Activated CD4-positive, alpha-beta memory T cell treated with anti-CD3 and anti-CD28 coated beads for 36 hours (primary cell): ENCODE measurements at regions of chr9 and their contacts with region 1.

Region 1: DNA sequence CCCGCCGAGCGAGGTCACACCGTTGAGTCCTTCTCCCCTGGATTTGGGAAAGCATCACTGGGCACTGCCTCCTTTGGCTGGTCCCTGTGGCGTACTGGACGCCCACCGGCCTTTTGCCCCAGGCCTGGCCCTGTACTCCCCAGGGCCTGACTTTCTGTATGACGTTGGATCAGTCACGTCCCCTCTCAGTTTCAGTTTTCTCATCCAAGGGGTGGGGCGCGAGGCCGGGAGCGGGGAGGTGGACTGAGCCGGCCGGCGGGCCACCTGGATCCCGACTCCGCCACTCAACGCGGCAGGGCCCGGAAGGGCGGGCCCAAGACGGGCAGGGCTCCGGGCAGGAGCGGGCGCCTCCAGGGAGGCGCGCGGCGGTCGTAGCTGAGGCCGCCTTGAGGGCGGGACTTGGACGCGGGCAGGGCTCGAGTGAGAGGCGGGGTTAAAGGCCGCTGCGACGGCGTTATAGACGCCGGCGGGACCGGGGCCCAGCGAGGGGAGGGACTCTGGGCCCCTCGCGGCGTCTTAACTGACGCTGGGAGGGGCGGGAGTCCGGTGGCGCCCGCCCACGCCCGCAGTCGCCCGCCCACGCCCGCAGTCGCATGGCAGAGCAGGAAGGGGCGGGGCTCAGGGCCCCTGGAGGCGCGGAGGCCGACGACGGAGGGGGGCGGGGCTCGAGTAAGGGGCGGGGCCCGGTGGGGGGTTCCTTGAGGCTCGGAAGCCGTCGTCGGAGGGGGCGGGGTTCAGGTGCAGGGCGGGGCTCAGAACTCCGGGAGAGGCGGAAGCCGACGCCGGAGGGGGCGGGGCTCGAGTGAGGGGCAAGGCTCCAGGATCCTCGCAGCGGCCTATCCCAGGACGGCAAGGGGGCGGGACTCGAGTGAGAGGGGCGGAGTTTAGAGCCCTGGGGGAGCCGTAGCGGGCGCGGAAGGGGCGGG is 549 bp upstream of the CARD19 start:
- DNase-seq: peak; percentile 100
- H3K4me3 Mint-ChIP-seq: peak overlapping the region; percentile 83
- H3K27ac Mint-ChIP-seq: peak overlapping the region; percentile 98
- H3K4me1 Mint-ChIP-seq: peaks cover 73% of the 10 kb centered on the region
- H3K27me3 Mint-ChIP-seq: no peaks in the 10 kb centered on the region

Region 2: DNA sequence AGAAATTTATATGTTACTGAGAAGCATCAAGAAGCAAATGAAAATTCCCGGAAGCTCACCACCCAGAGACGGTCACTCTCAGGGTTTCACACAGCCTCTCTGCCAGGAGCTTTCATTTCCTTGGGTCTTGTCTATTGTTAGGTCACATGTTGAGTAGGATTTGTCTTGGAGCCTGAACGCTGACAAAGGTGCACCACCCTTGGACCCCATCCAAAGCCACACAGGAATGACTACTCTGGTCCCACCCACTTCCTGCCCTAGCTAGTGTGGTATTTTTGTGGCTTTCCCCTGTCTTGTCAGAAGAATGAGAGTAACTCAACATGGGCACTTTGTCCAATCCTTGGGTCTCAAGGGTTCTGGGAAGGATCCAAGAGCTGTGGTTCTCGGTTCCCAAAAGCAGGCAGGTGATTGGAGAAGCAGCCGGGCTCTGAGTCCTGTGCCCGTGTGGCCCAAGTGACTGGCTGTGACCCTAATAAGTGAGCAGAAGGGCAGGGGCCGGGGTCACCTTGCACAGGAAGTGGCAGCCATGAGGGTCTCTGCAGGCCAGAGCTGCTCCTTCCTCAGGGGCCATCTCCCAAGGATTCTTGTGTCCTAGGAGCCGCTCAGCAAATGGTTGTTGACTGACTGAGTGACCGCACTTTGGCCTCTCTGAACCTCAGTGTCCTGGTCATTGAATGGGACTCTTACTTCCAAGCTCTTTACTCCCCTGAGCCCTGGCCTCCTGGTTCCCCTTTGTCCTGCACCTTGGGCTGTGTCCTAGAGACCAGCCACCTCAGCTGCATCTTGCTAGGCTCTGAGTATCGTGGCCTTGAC is 141.2 kb before region 1 on chr9:
- CTCF ChIA-PET with region 1: interaction called, 10 read pairs
- POLR2A ChIA-PET with region 1: no interaction called
- intact Hi-C with region 1: loop called (anchors 1 kb)
- DNase-seq: peak; percentile 94
- H3K4me3 Mint-ChIP-seq: peak overlapping the region; percentile 64
- H3K27ac Mint-ChIP-seq: peak overlapping the region; percentile 96
- H3K4me1 Mint-ChIP-seq: peaks cover 74% of the 10 kb centered on the region
- H3K27me3 Mint-ChIP-seq: no peaks in the 10 kb centered on the region

Region 3: DNA sequence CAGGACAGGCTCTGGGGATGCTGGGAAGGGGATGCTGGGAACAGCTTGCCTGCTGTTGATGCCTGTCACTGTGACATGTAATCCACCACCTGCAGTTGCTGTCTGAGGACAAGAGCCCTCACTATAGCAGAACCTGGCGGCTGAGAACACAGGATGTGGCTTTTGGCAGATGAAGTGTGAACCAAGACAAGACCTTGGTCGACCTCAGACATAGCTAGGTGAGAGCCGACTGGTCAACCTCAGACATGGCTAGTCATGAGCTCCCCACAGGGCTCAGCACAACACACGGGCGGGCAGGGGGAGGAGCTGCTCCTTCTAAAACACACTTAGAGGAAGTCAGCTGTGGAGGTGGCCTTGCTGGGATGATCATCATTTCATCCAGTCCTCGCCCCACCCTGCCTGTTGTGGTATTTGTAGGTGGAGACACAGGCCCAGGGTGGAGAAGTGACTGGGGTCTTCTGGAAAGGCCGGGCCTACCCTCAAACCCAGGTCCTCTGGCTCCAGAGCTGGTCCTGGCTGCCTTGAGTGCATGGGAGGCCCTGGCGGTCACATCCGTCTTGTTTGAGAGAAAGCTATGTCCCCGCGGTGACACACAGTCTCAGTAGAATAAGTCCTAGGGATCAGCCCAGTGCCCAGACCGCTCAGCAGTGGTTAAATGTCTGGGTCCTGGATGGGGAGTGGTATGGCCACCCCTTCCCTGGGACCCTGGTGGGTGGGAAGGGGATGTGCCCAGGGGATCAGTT is 30.9 kb before region 1 on chr9:
- CTCF ChIA-PET with region 1: interaction called, 5 read pairs
- POLR2A ChIA-PET with region 1: interaction called, 12 read pairs
- intact Hi-C with region 1: loop called (anchors 1 kb)
- DNase-seq: peak; percentile 95
- H3K4me3 Mint-ChIP-seq: peak overlapping the region; percentile 87
- H3K27ac Mint-ChIP-seq: peak overlapping the region; percentile 99
- H3K4me1 Mint-ChIP-seq: peaks cover 89% of the 10 kb centered on the region
- H3K27me3 Mint-ChIP-seq: no peaks in the 10 kb centered on the region

Region 4: GRCh38 chr9:93134015-93134739 is 38.7 kb after region 1 on chr9 and contains the start of gene NINJ1:
- CTCF ChIA-PET with region 1: no interaction called
- POLR2A ChIA-PET with region 1: no interaction called
- intact Hi-C with region 1: loop called (anchors 2 kb)
- DNase-seq: peak; percentile 94
- H3K4me3 Mint-ChIP-seq: peak within 1 kb of the TSS; percentile 94
- H3K27ac Mint-ChIP-seq: peak within 1 kb of the TSS; percentile 89
- H3K4me1 Mint-ChIP-seq: peaks cover 60% of the 10 kb centered on the region
- H3K27me3 Mint-ChIP-seq: no peaks in the 10 kb centered on the region
- total RNA-seq, gene NINJ1: 77.9 to 82.0 TPM

Region 5: DNA sequence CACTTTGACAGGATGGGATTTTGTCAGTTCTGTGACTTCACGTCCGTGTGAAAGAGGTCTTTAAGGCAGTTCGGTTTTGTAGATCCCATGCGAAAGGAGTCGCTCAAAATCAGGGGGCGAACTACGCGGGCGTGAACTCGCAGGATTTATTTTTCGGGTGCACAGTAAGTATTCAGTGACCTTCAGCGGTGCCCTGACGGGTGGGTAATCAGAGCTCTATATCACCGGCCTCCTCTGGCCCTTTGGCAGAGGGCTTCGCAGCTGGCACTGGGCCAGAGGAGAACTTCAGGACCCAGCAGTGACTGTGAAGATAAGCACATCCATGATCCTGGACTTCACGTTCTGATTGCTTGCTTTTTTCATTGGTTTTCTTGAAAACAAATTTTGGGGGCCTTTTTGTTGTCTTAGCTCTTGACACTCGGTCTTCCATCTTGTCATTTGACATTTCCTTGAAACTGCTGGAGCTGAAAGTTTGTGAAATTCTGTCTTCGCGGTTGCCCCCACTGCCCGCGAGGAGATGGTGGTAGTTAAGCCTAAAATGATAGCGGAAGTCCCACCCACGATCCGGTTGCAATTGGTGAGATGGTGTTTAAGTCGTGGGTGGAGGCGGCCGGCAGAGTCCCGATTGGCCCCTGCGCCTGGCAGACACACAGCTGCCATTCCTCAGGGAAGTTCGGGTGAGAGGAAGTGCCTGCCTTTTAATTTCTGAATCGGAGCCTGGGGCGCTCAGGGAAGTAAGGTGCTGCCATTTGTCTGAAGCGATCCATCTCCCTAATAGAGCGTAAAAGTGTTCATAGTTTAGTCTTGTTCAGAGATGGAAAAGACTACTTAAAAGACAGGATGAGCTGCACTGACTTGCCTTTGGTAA is 357.8 kb after region 1 on chr9 and contains the start of gene FAM120AOS:
- CTCF ChIA-PET with region 1: no interaction called
- POLR2A ChIA-PET with region 1: no interaction called
- intact Hi-C with region 1: loop called (anchors 5 kb)
- DNase-seq: peak; percentile 92
- H3K4me3 Mint-ChIP-seq: peak within 1 kb of the TSS; percentile 91
- H3K27ac Mint-ChIP-seq: peak within 1 kb of the TSS; percentile 93
- H3K4me1 Mint-ChIP-seq: peaks cover 44% of the 10 kb centered on the region
- H3K27me3 Mint-ChIP-seq: no peaks in the 10 kb centered on the region
- total RNA-seq, gene FAM120AOS: 35.4 to 36.4 TPM